ENCODE measurements at regions of chr1 and their contacts with region 1.

Region 1: DNA sequence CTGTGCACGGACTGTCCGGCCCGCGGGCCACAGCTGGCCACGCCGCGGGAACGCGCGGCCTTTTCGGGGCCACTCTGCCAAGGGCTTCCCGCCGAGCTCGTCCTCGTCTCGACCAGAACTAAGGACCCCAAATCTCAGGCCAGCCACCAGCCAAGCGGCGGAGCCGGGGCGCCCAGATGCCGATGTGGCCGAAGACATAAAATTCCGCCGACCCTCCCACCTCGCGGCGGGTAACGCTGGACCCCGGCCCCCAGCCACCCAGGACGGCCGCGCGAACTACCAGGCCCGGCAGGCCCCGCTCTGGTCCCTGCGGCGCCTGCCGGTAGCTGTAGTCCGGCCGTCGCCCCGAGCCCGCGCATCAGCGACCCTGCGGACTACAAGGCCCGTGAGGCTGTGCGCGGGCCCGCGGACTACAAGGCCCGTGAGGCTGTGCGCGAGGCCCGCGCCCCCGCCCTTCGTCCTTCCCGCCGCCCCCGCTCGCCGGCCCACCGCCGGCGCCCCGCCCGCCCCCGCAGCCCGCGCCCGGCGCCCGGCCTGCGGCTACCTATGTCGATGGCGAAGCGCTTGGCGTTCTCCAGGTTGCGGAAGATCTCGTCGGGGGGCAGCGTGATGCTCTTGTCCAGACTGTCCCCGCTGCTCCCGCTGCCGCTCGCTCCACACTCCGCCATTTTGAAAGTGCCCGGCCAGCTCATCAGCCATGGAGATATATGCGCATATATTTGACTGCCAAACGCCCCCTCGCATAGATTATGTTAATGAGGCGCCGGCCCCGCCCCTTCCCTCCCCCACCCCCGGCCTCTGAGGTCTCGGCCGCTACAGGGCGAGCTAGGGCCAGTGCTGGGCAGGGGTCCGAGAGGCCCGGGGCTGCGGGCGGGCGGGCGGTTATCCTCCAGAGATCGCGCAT is at the start of gene PANK4:
- DNase-seq: peak; percentile 90
- ATAC-seq: peak; percentile 93
- H3K4me3 Mint-ChIP-seq: peak within 1 kb of the TSS; percentile 96
- H3K27ac Mint-ChIP-seq: peak within 1 kb of the TSS; percentile 96
- H3K4me1 Mint-ChIP-seq: peaks cover 45% of the 10 kb centered on the region
- H3K27me3 Mint-ChIP-seq: peaks cover 3% of the 10 kb centered on the region
- CTCF ChIP-seq: no peak
- total RNA-seq, gene PANK4: 43.1 and 54.0 TPM in 2 replicates

Region 2: GRCh38 chr1:2115681-2116341 is 410.4 kb before region 1 on chr1:
- CTCF ChIA-PET with region 1: no interaction called
- POLR2A ChIA-PET with region 1: no interaction called
- intact Hi-C with region 1: no loop called
- DNase-seq: no peak
- ATAC-seq: no peak
- H3K4me3 Mint-ChIP-seq: no peak overlapping the region
- H3K27ac Mint-ChIP-seq: no peak overlapping the region
- H3K4me1 Mint-ChIP-seq: peaks cover 43% of the 10 kb centered on the region
- H3K27me3 Mint-ChIP-seq: no peaks in the 10 kb centered on the region
- CTCF ChIP-seq: no peak

Region 3: GRCh38 chr1:2391041-2391930 is 134.9 kb before region 1 on chr1 and contains the starts of genes MORN1 and RER1:
- CTCF ChIA-PET with region 1: no interaction called
- POLR2A ChIA-PET with region 1: interaction called, 9 read pairs
- intact Hi-C with region 1: loop called (anchors 1 kb)
- DNase-seq: peak; percentile 96
- ATAC-seq: peak; percentile 94
- H3K4me3 Mint-ChIP-seq: peak within 1 kb of the TSS; percentile 88
- H3K27ac Mint-ChIP-seq: peak within 1 kb of the TSS; percentile 68
- H3K4me1 Mint-ChIP-seq: peaks cover 52% of the 10 kb centered on the region
- H3K27me3 Mint-ChIP-seq: no peaks in the 10 kb centered on the region
- CTCF ChIP-seq: no peak
- total RNA-seq, gene MORN1: 15.6 and 17.8 TPM in 2 replicates
- total RNA-seq, gene RER1: 102 and 105 TPM in 2 replicates

Region 4: DNA sequence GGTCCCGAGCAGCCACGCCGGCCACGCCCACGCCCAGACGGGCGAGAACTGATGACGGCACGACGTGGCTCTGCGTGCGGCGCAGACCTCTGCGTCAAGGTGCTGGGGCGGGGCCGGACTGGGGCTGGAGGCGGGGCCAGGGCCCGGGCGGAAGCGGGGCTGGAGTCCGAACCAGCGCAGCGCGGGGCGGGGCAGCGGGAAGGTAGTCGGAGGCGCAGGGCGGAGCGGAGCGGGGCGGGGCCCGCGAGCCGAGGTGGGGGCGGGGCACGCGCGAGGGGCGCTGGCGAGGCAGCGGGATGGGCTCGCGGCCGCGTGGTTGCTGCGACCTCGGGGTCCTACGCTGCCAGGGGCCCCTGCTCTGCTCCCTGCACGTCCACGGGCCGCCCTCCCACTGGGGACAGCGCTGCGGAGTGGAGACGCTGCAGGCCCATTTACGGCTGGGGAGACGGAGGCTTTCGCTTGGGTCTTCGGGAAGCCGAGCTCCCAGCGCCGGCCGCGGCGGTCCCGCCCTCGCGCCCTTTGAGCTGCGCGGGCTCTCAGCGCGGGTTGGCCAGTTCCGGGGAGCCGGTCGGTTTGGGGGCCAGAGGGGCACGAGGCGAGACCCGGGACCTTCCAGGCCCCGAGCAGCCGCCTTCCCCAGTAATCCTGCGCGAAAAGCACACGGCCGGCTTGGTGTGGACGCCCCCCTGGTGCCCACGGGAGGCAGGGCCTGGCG is 113.5 kb before region 1 on chr1 and contains the start of gene PEX10:
- CTCF ChIA-PET with region 1: no interaction called
- POLR2A ChIA-PET with region 1: interaction called, 6 read pairs
- intact Hi-C with region 1: loop called (anchors 1 kb)
- DNase-seq: peak; percentile 100
- ATAC-seq: peak; percentile 93
- H3K4me3 Mint-ChIP-seq: peak within 1 kb of the TSS; percentile 83
- H3K27ac Mint-ChIP-seq: peak within 1 kb of the TSS; percentile 71
- H3K4me1 Mint-ChIP-seq: peaks cover 45% of the 10 kb centered on the region
- H3K27me3 Mint-ChIP-seq: no peaks in the 10 kb centered on the region
- CTCF ChIP-seq: no peak
- total RNA-seq, gene PEX10: 17.4 and 18.9 TPM in 2 replicates

Region 5: DNA sequence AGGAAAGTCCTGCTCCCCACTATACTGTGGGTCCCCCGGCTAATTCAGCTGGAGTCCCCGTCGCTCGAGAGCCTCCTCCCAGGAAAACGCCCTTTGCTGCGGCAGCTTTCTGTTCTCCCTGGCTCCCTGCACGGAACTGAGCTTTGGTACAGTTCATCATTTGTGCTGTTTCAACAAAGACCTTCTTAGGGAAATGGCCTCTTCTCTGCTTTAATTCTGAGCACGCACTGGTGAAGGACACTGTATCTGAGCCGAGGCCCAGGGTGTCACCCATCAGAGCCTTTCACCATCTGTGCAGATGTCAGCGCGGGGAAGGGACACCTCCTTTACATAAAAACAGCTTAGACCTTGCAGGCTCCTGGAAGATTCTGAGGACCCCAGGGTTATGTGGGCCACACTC is 100.3 kb before region 1 on chr1:
- CTCF ChIA-PET with region 1: no interaction called
- POLR2A ChIA-PET with region 1: no interaction called
- intact Hi-C with region 1: no loop called
- DNase-seq: no peak
- ATAC-seq: no peak
- H3K4me3 Mint-ChIP-seq: no peak overlapping the region
- H3K27ac Mint-ChIP-seq: no peak overlapping the region
- H3K4me1 Mint-ChIP-seq: no peaks in the 10 kb centered on the region
- H3K27me3 Mint-ChIP-seq: peaks cover 3% of the 10 kb centered on the region
- CTCF ChIP-seq: no peak

Region 6: DNA sequence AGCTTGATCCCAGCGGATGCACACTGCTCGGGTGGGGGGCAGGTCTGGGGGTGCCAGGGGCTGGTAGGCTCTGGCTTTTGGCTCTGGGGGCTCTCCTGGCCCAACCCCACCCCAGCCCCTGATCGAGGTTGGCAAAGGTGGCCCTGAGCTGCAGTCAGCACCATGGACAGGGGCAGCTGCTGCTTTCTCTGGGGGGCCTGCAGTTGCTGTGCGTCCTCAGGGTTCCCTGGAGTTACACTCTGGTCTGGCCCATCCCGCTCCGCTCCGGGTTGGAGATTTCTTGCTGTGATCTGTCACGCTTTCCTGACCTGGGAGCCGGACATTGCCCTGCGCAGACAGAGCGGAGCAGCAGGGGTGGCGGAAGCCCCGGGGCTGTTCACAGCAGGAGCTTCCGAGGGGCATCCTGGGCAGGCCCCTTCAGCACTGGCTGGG is 58.1 kb before region 1 on chr1:
- CTCF ChIA-PET with region 1: no interaction called
- POLR2A ChIA-PET with region 1: no interaction called
- intact Hi-C with region 1: loop called (anchors 1 kb)
- DNase-seq: peak; percentile 29
- ATAC-seq: no peak
- H3K4me3 Mint-ChIP-seq: no peak overlapping the region
- H3K27ac Mint-ChIP-seq: no peak overlapping the region
- H3K4me1 Mint-ChIP-seq: peaks cover 17% of the 10 kb centered on the region
- H3K27me3 Mint-ChIP-seq: peaks cover 6% of the 10 kb centered on the region
- CTCF ChIP-seq: no peak

Region 7: GRCh38 chr1:2556277-2556677 is 30.1 kb after region 1 on chr1 and contains the start of gene TNFRSF14:
- CTCF ChIA-PET with region 1: interaction called, 3 read pairs
- POLR2A ChIA-PET with region 1: interaction called, 12 read pairs
- intact Hi-C with region 1: no loop called
- DNase-seq: peak; percentile 62
- ATAC-seq: peak; percentile 61
- H3K4me3 Mint-ChIP-seq: peak within 1 kb of the TSS; percentile 95
- H3K27ac Mint-ChIP-seq: peak within 1 kb of the TSS; percentile 96
- H3K4me1 Mint-ChIP-seq: peaks cover 48% of the 10 kb centered on the region
- H3K27me3 Mint-ChIP-seq: no peaks in the 10 kb centered on the region
- CTCF ChIP-seq: no peak
- total RNA-seq, gene TNFRSF14: 140 and 148 TPM in 2 replicates

Region 8: DNA sequence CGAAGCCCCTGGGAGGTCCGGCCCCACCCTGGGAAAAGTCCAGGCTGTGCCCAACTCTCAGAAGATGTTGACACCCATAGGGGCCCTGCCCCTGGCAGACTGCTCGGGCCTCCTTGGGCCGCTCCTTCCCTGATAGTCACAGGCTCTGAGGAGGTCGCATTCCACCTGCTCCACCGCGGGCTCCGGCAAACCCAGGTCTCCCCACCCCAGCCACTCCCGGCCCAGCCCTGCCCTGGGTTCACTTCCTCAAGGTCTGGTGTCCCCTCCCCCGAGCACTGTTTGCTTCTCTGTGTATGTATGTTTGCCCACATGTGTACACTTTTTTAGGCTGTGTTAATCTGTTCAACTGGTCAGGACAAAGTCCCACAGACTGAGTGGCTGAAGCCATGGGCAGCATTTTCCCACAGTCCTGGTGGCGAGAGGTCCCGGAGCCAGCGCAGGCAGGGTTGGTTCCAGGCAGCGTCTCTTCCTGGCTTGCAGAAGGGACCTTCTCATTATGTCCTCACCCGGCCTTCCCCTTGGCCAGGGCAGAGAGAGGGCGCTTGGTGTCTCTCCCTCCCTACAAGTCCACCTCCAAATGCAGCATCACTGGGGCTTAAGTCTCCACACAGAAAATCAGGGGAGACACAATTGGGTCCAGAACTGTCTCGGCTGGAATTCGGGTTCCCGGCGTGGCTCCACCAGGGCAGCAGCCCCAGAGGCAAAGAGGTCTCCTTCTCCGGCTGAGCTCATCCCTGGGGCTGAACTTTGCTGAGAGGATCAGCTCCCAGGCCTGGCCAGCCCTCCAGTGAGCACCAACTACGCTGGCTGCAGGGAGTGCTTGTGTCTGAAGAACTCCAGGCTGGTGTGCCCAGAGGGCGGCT is 49.9 kb after region 1 on chr1:
- CTCF ChIA-PET with region 1: interaction called, 3 read pairs
- POLR2A ChIA-PET with region 1: interaction called, 13 read pairs
- intact Hi-C with region 1: no loop called
- DNase-seq: no peak
- ATAC-seq: no peak
- H3K4me3 Mint-ChIP-seq: peak overlapping the region; percentile 78
- H3K27ac Mint-ChIP-seq: peak overlapping the region; percentile 95
- H3K4me1 Mint-ChIP-seq: peaks cover 72% of the 10 kb centered on the region
- H3K27me3 Mint-ChIP-seq: no peaks in the 10 kb centered on the region
- CTCF ChIP-seq: no peak

Region 9: DNA sequence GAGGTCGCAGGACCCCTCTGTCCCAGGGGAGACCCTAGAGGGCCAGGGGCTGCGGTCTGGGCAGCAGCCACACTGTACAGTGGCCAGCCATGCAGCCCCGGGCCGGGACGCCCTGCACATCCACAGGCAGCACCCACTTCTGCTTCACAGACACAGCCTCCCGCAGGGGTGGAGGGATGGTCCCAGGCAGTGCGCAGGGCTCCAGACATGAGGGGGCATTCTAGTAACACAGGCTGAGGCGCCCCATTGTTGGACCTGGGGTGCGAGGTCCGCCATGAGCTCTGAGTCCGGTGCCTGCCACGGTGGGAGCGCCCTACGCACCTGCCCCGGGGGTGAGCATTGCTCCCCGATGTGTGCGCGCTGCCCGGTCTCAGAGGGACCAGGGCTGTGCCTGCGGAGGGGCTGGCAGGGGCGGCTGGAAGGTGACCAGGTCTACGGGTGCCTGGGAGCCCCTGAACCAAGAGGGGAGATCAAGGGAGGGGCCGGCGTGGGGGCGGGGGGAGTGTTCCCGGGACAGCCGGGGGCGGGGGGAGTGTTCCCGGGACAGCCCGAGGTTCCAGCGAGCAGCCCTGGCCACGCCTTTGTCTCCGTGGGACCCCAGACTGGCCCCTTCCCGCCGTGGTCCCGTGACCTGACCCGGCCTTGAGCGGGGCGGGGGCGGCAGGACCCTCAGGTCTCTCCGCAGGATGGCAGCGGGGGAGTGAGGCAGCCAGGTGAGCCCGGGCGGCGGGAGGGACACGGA is 102.2 kb after region 1 on chr1:
- CTCF ChIA-PET with region 1: no interaction called
- POLR2A ChIA-PET with region 1: no interaction called
- intact Hi-C with region 1: no loop called
- DNase-seq: peak; percentile 15
- ATAC-seq: no peak
- H3K4me3 Mint-ChIP-seq: no peak overlapping the region
- H3K27ac Mint-ChIP-seq: no peak overlapping the region
- H3K4me1 Mint-ChIP-seq: no peaks in the 10 kb centered on the region
- H3K27me3 Mint-ChIP-seq: peaks cover 40% of the 10 kb centered on the region
- CTCF ChIP-seq: no peak

Region 10: GRCh38 chr1:2642560-2643413 is 116.6 kb after region 1 on chr1:
- CTCF ChIA-PET with region 1: no interaction called
- POLR2A ChIA-PET with region 1: interaction called, 5 read pairs
- intact Hi-C with region 1: loop called (anchors 1 kb)
- DNase-seq: peak; percentile 92
- ATAC-seq: peak; percentile 79
- H3K4me3 Mint-ChIP-seq: peak overlapping the region; percentile 80
- H3K27ac Mint-ChIP-seq: peak overlapping the region; percentile 73
- H3K4me1 Mint-ChIP-seq: peaks cover 11% of the 10 kb centered on the region
- H3K27me3 Mint-ChIP-seq: peaks cover 3% of the 10 kb centered on the region
- CTCF ChIP-seq: no peak

Region 11: DNA sequence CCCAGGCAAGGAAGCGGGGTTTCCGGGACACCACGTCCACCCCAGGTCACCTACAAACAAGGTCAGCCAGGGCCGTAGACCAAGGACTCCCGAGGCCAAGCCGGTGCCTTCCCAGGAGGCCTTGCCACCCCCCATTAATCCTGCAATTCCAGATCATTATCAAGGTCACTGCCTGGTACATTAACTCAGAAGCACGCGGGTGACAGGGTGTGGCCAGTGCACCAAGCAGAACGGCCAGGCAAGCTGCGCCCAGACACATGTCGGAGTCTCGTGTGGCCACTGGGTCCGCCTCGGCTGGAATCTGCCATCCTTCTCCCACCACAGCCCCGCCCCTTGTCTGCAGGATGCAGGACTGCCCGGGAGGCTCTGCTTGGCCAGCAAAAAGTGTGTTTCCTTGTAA is 687.6 kb after region 1 on chr1:
- CTCF ChIA-PET with region 1: no interaction called
- POLR2A ChIA-PET with region 1: no interaction called
- intact Hi-C with region 1: no loop called
- DNase-seq: no peak
- ATAC-seq: no peak
- H3K4me3 Mint-ChIP-seq: no peak overlapping the region
- H3K27ac Mint-ChIP-seq: no peak overlapping the region
- H3K4me1 Mint-ChIP-seq: no peaks in the 10 kb centered on the region
- H3K27me3 Mint-ChIP-seq: peaks cover 3% of the 10 kb centered on the region
- CTCF ChIP-seq: no peak